Gastrocnemius medialis (tissue), 4 donors: ENCODE measurements at regions of chr2 and their contacts with region 1.

Region 1: GRCh38 chr2:88627056-88627855 is at the start of gene EIF2AK3:
- DNase-seq: peak; percentile 99
- ATAC-seq: peak; percentile 91 to 93
- H3K4me3 ChIP-seq: peak within 1 kb of the TSS; percentile 71 to 96 (median 80)
- H3K27ac ChIP-seq: peak within 1 kb of the TSS; percentile 93 to 98 (median 95)
- H3K4me1 ChIP-seq: peaks cover 21 to 39% of the 10 kb centered on the region in 2 donors
- H3K27me3 ChIP-seq: no peaks in the 10 kb centered on the region
- CTCF ChIP-seq: peak; percentile 2 to 33 (median 22)
- POLR2A ChIP-seq: peak; percentile 98
- total RNA-seq, gene EIF2AK3: 5.9 to 20.1 (median 9.8) TPM

Region 2: DNA sequence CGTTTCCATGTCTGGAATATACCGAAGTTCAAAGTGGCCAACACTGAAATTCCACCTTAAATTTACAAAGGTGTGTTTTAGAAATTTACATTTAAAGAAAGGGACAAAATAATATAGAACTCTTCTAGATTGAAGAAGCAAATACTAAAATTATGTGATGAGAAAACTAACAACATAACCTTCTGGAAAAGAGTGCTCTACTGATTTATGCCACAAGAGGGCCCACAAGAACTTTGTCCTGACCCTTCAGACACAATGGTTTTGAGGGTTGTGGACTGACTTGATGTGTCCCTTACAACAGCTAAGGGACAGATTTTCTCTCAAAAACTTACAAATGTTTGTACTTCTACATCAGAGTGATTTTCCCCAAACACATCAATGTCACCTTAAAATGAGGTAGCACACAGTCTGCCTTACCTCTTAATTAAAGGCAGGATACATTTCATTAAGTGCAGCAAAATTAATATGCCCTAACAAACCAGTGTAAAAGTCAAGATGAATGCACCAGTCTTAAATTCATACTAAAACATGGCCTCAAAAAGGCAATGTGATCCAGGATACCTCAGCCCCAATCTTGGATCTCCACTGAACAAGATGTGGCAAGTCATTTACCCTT is 36.1 kb before region 1 on chr2:
- in situ Hi-C with region 1: no loop called
- intact Hi-C with region 1: loop called (anchors 5 kb)
- DNase-seq: peak in 1 of 2 donors; percentile 30
- ATAC-seq: peak; percentile 90 to 95
- H3K4me3 ChIP-seq: no peak overlapping the region
- H3K27ac ChIP-seq: no peak overlapping the region
- H3K4me1 ChIP-seq: no peaks in the 10 kb centered on the region
- H3K27me3 ChIP-seq: no peaks in the 10 kb centered on the region
- CTCF ChIP-seq: peak; percentile 72 to 85 (median 78)
- POLR2A ChIP-seq: no peak

Region 3: GRCh38 chr2:88600038-88600465 is 27.2 kb before region 1 on chr2:
- in situ Hi-C with region 1: no loop called
- intact Hi-C with region 1: loop called (anchors 1 kb)
- DNase-seq: peak; percentile 14 to 22
- ATAC-seq: peak; percentile 90 to 97
- H3K4me3 ChIP-seq: no peak overlapping the region
- H3K27ac ChIP-seq: peak overlapping the region; percentile 65 to 73 (median 72)
- H3K4me1 ChIP-seq: peaks cover 24 to 28% of the 10 kb centered on the region in 2 donors
- H3K27me3 ChIP-seq: no peaks in the 10 kb centered on the region
- CTCF ChIP-seq: no peak
- POLR2A ChIP-seq: peak in 1 of 2 donors; percentile 34

Region 4: GRCh38 chr2:88659538-88659916 is 32.3 kb after region 1 on chr2:
- in situ Hi-C with region 1: no loop called
- intact Hi-C with region 1: loop called (anchors 1 kb)
- DNase-seq: peak; percentile 87 to 91
- ATAC-seq: peak; percentile 96 to 98
- H3K4me3 ChIP-seq: peak overlapping the region; percentile 43 to 53 (median 52)
- H3K27ac ChIP-seq: peak overlapping the region; percentile 91 to 99 (median 96)
- H3K4me1 ChIP-seq: peaks cover 22 to 30% of the 10 kb centered on the region in 2 donors
- H3K27me3 ChIP-seq: no peaks in the 10 kb centered on the region
- CTCF ChIP-seq: no peak
- POLR2A ChIP-seq: peak; percentile 66 to 92

Region 5: DNA sequence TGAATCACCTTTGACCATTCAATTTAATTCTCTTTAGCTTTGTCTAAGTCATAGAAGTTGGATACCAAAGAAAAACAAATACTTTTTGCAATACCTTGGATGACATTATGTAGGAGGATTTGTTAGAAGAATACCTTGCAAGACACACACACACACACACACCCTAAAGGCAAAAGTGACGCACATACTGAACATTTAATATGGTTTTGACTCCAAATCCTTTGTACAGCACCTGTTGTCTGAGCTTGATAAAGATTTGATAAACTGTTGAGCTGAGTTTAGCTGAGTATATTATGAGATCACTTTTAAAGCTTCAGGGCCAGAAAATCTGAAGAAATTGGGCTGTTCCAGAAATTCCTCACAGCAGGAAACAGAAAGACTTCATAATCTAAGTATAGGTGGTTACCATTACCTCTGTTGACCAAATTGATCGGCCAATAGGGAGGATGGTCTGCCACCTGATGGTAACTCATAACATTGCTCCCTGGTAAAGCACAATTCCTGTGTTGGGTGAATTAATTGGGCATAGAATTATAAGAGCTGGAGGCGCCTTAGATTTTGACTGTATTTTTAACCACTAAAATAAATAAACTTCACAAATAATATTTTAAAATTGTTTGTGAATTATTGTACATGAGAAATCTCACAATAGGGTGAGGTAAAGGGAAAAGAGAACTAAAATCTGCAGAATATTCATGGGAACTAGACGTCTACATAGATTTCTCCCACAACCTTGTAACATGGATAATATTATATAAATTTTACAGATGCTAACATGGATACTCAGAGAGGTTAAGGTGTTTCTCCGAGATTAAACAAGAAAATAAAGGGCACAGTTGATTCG is 42.3 kb after region 1 on chr2:
- in situ Hi-C with region 1: loop called in 2 of 4 experiments (anchors 5 kb)
- intact Hi-C with region 1: loop called (anchors 2 kb)
- DNase-seq: no peak
- ATAC-seq: peak; percentile 83 to 93
- H3K4me3 ChIP-seq: no peak overlapping the region
- H3K27ac ChIP-seq: peak overlapping the region in 1 of 4 donors; percentile 39
- H3K4me1 ChIP-seq: peaks cover 4 to 6% of the 10 kb centered on the region in 2 donors
- H3K27me3 ChIP-seq: no peaks in the 10 kb centered on the region
- CTCF ChIP-seq: peak; percentile 64 to 79 (median 72)
- POLR2A ChIP-seq: no peak

Region 6: DNA sequence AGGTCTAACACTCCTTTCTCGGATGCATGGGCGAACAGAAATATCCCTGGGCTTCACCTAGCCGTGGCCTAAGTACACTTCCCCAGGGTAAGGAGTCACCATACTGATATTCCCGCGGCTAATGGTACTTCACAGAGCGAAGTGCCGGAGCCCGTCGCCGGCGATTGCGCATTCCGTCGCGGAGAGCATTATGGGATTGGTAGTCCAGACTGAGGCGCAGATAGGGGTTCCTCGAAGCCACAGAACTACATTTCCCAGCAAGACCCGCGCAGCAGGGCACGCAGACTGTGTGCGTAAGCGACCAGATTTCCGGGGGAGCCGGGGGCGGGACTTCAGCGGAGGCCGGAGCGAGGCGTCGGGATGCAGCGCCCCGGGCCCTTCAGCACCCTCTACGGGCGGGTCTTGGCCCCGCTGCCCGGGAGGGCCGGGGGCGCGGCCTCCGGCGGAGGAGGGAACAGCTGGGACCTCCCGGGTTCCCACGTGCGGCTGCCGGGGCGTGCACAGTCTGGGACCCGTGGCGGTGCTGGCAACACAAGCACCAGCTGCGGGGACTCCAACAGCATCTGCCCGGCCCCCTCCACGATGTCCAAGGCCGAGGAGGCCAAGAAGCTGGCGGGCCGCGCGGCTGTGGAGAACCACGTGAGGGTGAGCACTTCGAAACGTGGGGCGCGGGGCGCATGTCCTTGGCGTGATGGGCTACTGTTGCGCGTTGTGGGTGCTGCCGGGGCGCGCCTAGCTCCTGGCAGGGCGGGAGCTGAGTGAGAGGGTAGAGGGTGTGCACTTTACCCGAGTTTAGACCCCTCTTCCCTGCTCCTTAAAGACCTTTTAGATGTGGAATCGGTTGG is 64.3 kb after region 1 on chr2 and contains the start of gene RPIA:
- in situ Hi-C with region 1: no loop called
- intact Hi-C with region 1: loop called (anchors 1 kb)
- DNase-seq: peak; percentile 99
- ATAC-seq: peak; percentile 92 to 97
- H3K4me3 ChIP-seq: peak within 1 kb of the TSS; percentile 76 to 94 (median 84)
- H3K27ac ChIP-seq: peak within 1 kb of the TSS; percentile 86 to 93 (median 90)
- H3K4me1 ChIP-seq: peaks cover 45 to 49% of the 10 kb centered on the region in 2 donors
- H3K27me3 ChIP-seq: no peaks in the 10 kb centered on the region
- CTCF ChIP-seq: peak; percentile 41 to 86 (median 71)
- POLR2A ChIP-seq: peak; percentile 80 to 86
- total RNA-seq, gene RPIA: 3.3 to 6.8 (median 5.9) TPM